Heart left ventricle (tissue), 16 donors: ENCODE measurements at regions of chr1 and their contacts with region 1.

Region 1: DNA sequence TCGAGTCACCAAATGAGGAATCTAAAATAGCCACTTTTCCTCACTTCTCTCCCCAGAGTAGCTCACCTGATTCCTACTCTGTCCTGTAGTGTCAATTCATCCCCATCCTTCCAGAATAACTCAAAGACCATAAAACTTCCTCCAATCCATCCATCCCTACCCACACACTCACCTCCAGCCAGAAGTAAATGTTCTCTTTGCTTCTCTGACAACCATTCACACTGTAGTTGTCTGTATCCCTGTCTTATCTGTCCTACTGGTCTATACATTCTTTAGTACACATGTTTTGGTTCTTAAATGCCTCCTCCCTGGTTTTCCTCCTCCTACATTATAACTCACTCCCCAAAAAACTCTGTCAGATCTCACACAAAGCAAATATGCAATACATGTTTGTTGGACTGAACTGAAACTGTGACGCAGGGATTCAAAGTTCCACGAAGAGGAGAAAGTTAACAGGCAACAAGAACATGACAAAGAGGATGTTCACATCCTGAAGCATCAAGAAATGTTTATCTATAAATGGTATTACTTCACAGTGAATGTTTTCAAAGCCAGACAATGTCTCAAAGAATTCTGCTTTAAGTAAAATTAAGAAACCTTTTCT is 11.0 kb downstream of the TP53BP2 start:
- DNase-seq: no peak
- ATAC-seq: no peak
- H3K4me3 ChIP-seq: no peak overlapping the region
- H3K27ac ChIP-seq: peak overlapping the region in 3 of 12 donors; percentile 7 to 53 (median 18)
- H3K4me1 ChIP-seq: peaks cover 0 to 78% (median 52%) of the 10 kb centered on the region in 12 donors
- H3K27me3 ChIP-seq: no peaks in the 10 kb centered on the region
- CTCF ChIP-seq: no peak
- POLR2A ChIP-seq: no peak

Region 2: GRCh38 chr1:223819730-223820514 is 14.8 kb before region 1 on chr1:
- intact Hi-C with region 1: loop called in 1 of 10 experiments (anchors 2 kb)
- DNase-seq: no peak
- ATAC-seq: peak; percentile 21 to 88 (median 77)
- H3K4me3 ChIP-seq: peak overlapping the region in 2 of 12 donors; percentile 4 to 27
- H3K27ac ChIP-seq: peak overlapping the region in 7 of 12 donors; percentile 1 to 55 (median 41)
- H3K4me1 ChIP-seq: peaks cover 0 to 53% (median 25%) of the 10 kb centered on the region in 12 donors
- H3K27me3 ChIP-seq: no peaks in the 10 kb centered on the region
- CTCF ChIP-seq: no peak
- POLR2A ChIP-seq: no peak